Lower lobe of right lung (tissue), 2 donors: ENCODE measurements at regions of chr2 and their contacts with region 1.

Region 1: DNA sequence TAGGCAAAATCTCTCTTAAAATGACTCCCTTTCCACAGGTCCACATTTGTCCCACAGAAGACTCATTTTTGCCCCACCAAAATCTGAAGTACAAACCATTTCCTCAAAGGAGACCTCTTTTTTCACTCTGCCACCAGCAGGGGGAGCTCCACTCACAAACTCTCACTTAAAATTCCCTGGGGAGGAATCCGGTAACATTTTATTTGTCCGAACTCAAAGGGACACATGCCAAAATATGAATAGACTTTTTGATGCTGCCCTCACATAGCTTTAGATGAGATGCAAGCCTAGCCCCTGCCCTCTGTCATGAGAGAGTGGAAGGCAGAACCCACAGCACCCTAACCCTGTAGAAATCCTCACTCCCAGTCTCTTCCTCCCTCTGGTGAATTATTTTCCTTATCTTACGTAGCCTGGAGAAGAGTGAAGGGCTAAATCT is 57.1 kb downstream of the RMDN2 start:
- DNase-seq: peak; percentile 60
- ATAC-seq: peak; percentile 51 to 62
- H3K4me3 ChIP-seq: peak overlapping the region; percentile 25
- H3K27ac ChIP-seq: no peak overlapping the region
- H3K4me1 ChIP-seq: peaks cover 6% of the 10 kb centered on the region
- H3K27me3 ChIP-seq: no peaks in the 10 kb centered on the region
- CTCF ChIP-seq: peak; percentile 83

Region 2: GRCh38 chr2:38115216-38116032 is 133.3 kb after region 1 on chr2:
- intact Hi-C with region 1: loop called (anchors 10 kb)
- DNase-seq: peak; percentile 85
- ATAC-seq: peak; percentile 90 to 93
- H3K4me3 ChIP-seq: no peak overlapping the region
- H3K27ac ChIP-seq: no peak overlapping the region
- H3K4me1 ChIP-seq: peaks cover 38% of the 10 kb centered on the region
- H3K27me3 ChIP-seq: no peaks in the 10 kb centered on the region
- CTCF ChIP-seq: peak; percentile 93

Region 3: DNA sequence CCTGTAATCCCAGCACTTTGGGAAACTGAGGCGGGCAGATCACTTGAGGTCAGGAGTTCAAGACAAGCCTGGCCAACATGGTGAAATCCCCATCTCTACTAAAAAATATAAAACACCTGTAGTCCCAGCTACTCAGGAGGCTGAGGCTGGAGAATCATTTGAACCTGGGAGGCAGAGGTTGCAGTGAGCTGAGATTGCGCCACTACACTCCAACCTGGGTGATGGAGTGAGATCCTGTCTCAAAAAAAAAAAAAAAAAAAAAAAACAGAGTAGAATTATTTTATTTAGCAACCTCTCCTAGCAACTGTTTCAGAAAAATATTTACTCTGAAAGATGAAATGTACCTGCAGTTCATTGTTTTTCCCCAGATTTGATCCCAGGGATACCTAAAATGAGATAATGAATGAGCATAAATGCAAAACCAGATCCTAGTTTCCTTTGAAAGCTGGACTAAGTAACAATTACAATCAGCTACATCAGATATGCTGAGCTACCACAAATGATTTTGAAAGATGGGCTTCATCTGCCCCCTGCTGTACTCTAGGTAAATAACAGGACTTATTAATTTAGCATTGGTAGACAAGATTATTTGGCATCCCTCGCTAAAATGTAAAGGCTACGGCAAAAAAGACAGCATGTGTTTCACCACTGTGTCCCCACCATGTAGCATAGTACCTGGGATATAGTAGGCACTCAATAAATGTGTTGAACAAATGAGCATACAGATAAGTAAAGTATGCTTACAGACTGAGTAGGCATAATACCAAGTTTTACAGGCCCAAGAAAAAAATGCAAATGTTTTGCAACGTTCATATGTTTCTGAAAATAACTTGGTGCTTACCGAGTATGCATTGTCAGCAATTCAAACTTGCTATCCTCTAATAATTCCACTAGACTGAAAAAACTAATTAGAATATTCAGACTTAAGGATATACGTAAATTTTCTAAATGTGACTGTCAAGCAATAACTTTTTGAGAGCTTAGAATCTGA is 292.4 kb after region 1 on chr2:
- intact Hi-C with region 1: loop called (anchors 10 kb)
- DNase-seq: no peak
- ATAC-seq: peak; percentile 88 to 90
- H3K4me3 ChIP-seq: no peak overlapping the region
- H3K27ac ChIP-seq: no peak overlapping the region
- H3K4me1 ChIP-seq: no peaks in the 10 kb centered on the region
- H3K27me3 ChIP-seq: no peaks in the 10 kb centered on the region
- CTCF ChIP-seq: peak; percentile 64